PC-9 (cell line): ENCODE measurements at regions of chr6 and their contacts with region 1.

Region 1: DNA sequence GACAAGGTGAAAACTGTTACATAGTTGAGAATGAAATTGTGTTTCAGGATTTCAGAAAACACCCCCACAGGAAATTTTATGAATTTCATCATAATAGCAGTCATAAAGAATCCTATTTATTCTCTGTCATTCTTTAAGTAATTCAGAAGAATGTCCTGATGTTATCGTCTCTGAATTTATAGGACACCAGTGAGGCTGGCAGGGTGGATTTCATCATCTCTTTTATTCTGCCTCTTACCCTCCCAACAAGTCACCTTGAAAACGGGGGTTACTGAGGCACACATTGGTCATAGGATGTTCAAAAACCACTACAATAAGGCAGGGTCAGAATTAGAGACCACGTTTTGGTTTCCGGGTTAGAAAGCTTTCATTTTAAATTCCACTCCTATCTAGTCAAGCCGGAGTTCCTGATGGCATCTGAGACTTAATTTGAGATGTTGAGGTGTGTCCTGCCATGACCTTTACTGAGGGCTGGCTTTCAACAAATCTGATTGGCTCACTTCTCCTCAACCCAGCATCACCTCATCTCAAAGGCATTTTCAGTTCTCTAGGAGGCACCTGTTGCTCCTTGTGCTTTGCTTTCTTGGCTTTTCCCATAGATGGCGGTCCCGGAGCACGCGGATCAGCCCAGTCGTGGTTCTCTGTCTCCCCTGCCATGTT is 230.6 kb upstream of the SUPT3H start:
- DNase-seq: peak; percentile 75 to 97
- H3K4me3 ChIP-seq: peak overlapping the region; percentile 2; the same call in 1 of the 2 replicates
- H3K27ac ChIP-seq: peak overlapping the region; percentile 95
- H3K4me1 ChIP-seq: peaks cover 62% of the 10 kb centered on the region
- H3K27me3 ChIP-seq: no peaks in the 10 kb centered on the region
- CTCF ChIP-seq: no peak

Region 2: GRCh38 chr6:44630125-44631028 is 978.0 kb before region 1 on chr6:
- CTCF ChIA-PET with region 1: no interaction called
- POLR2A ChIA-PET with region 1: no interaction called
- intact Hi-C with region 1: loop called (anchors 2 kb)
- DNase-seq: peak in 1 of 2 experiments; percentile 57
- H3K4me3 ChIP-seq: no peak overlapping the region
- H3K27ac ChIP-seq: no peak overlapping the region
- H3K4me1 ChIP-seq: no peaks in the 10 kb centered on the region
- H3K27me3 ChIP-seq: no peaks in the 10 kb centered on the region
- CTCF ChIP-seq: peak; percentile 74

Region 3: GRCh38 chr6:45377554-45378333 is 230.6 kb before region 1 on chr6 and contains the start of gene SUPT3H:
- CTCF ChIA-PET with region 1: no interaction called
- POLR2A ChIA-PET with region 1: no interaction called
- intact Hi-C with region 1: loop called (anchors 5 kb)
- DNase-seq: peak; percentile 76 to 89
- H3K4me3 ChIP-seq: peak within 1 kb of the TSS; percentile 93
- H3K27ac ChIP-seq: peak within 1 kb of the TSS; percentile 94
- H3K4me1 ChIP-seq: peaks cover 8% of the 10 kb centered on the region
- H3K27me3 ChIP-seq: no peaks in the 10 kb centered on the region
- CTCF ChIP-seq: no peak
- total RNA-seq, gene SUPT3H: 9.0 and 9.2 TPM in 2 replicates

Region 4: DNA sequence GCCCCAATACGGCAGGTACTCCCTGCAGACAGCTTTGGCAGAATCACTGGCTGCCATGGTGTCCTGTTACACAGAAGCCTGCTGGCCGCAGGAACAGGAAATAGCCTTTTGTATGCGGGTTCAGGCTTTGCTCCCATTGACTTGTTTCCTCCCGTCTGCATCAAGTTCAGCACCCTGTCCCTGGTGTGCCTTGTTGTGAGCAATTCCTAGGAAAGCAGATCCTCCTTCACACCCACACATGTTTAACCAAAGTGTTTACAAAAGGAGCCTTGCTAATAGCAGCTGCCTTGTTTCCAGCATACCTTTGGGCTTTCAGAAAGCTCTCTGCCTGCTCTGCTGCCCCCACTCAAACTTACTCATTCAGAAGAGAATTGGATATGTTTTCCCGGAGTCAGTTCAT is 103.4 kb before region 1 on chr6:
- CTCF ChIA-PET with region 1: interaction called, 4 read pairs
- POLR2A ChIA-PET with region 1: no interaction called
- intact Hi-C with region 1: loop called (anchors 1 kb)
- DNase-seq: peak in 1 of 2 experiments; percentile 56
- H3K4me3 ChIP-seq: no peak overlapping the region
- H3K27ac ChIP-seq: no peak overlapping the region
- H3K4me1 ChIP-seq: peaks cover 32% of the 10 kb centered on the region
- H3K27me3 ChIP-seq: no peaks in the 10 kb centered on the region
- CTCF ChIP-seq: no peak

Region 5: GRCh38 chr6:45577836-45578504 is 30.4 kb before region 1 on chr6:
- CTCF ChIA-PET with region 1: no interaction called
- POLR2A ChIA-PET with region 1: no interaction called
- intact Hi-C with region 1: no loop called
- DNase-seq: no peak
- H3K4me3 ChIP-seq: no peak overlapping the region
- H3K27ac ChIP-seq: no peak overlapping the region
- H3K4me1 ChIP-seq: no peaks in the 10 kb centered on the region
- H3K27me3 ChIP-seq: no peaks in the 10 kb centered on the region
- CTCF ChIP-seq: no peak

Region 6: DNA sequence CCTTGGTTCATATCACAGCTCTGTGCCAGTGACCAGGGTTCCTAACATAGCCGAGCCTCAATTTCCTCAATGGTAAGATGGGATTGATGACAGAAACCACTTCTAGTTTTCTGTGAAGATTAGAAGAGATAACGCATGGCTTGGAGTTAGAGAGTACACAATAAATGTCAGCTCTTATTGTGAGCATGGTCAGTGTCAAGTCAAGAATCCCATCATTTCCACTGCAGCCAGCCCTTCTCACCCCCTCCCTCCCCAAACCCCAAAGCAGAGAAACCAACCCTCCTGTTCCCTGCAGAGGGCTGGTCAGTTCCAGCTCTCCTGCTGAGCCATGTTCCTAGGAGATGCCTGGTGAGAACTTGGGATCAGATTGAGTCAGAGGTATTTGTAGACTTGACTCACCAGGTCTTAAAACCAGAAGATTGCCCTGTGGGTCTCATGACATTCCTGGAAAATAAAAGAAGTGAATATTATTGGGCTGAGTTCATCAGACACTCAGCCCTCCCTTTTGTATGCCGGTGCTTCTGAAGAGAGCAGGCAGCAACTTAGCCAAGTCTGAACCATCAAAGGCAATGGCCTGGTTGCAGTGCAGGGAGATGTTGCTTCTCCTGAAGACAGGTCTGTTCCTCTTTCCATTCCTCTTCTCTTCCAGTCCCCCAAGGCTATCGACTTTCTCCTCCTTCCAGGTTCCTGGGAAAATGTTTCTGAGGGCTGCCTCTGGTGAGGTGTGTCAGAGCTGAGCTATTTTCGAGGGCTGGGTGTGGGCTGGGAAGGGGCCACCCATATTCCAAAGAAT is 47.4 kb after region 1 on chr6:
- CTCF ChIA-PET with region 1: no interaction called
- POLR2A ChIA-PET with region 1: interaction called, 11 read pairs
- intact Hi-C with region 1: loop called (anchors 1 kb)
- DNase-seq: peak; percentile 72 to 98
- H3K4me3 ChIP-seq: peak overlapping the region; percentile 22; the same call in 1 of the 2 replicates
- H3K27ac ChIP-seq: peak overlapping the region; percentile 92
- H3K4me1 ChIP-seq: peaks cover 61% of the 10 kb centered on the region
- H3K27me3 ChIP-seq: no peaks in the 10 kb centered on the region
- CTCF ChIP-seq: no peak

Region 7: DNA sequence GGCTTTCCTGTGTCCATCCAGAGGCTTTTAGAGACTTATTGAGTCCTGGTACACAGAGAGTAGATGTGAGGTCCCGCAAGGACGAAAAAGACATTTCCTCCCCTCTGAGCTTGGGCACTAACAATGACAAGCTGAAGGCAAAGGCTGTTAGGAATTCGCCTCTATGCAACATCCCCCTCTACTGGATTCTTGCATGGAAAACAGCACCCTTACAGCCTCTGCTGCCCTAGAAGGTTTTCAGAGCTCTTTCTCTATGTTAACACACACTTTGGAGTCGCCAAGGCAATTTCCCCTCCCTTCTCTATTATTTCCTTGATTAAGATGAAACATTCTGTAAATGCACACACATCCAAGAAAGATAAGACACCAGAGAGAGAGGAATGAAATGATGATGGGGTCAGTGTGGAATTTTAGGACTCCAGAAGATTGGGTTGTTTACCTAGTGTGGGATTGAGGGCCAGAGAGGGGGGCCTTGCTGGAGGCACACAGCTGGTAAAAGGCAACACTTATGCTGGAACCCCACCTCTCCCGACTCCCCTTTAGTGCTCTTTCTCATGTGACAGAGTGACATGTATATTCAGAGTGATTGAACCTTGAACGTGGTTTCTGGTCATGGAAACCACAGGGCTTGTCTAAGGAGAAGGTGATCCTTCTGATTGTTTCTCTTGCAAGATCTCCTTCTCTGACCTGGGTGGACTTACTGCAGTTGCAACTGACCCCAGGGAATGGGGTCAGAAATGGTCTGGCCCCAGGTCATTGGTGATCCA is 106.5 kb after region 1 on chr6:
- CTCF ChIA-PET with region 1: interaction called, 4 read pairs
- POLR2A ChIA-PET with region 1: interaction called, 3 read pairs
- intact Hi-C with region 1: loop called (anchors 1 kb)
- DNase-seq: peak; percentile 52 to 75
- H3K4me3 ChIP-seq: no peak overlapping the region
- H3K27ac ChIP-seq: no peak overlapping the region
- H3K4me1 ChIP-seq: peaks cover 25% of the 10 kb centered on the region
- H3K27me3 ChIP-seq: no peaks in the 10 kb centered on the region
- CTCF ChIP-seq: peak; percentile 85

Region 8: GRCh38 chr6:45880159-45880558 is 271.8 kb after region 1 on chr6:
- CTCF ChIA-PET with region 1: no interaction called
- POLR2A ChIA-PET with region 1: no interaction called
- intact Hi-C with region 1: no loop called
- DNase-seq: peak; percentile 51 to 82
- H3K4me3 ChIP-seq: no peak overlapping the region
- H3K27ac ChIP-seq: no peak overlapping the region; the same call in 1 of the 2 replicates
- H3K4me1 ChIP-seq: peaks cover 16% of the 10 kb centered on the region
- H3K27me3 ChIP-seq: no peaks in the 10 kb centered on the region
- CTCF ChIP-seq: no peak